ENCODE measurements at regions of chr4 and their contacts with region 1.

Region 1: DNA sequence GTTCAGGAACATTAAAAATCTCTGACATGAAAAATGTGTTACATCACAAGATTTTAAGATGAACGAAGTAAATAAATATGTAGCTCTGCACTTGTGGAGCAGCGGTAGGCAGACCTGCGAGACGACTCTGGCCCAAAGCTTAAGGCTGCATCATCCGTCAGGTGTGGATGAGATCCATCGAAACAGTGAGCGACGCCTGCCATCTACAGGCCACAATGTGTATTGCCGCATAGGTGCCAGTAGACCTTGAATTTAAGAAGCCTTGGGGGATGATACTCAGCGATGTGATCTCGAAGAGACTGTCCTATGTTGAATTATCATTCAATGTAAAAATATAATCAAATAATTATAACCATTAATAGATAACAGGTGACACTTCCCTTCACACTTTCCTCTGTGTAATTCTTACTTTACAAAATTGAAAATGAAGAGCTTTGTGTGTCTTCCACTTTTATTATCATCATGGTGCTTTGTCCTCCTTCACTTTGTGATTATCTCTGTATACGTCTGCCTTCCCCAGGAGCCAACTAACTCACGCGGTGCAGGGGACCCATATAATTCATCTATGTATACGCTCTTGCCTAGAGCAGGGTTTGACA is 851.0 kb downstream of the RAB28 start:
- DNase-seq: peak; percentile 62 to 75 (median 69)
- ATAC-seq: peak; percentile 79 to 91 (median 89)
- H3K4me3 ChIP-seq: no peak overlapping the region
- H3K27ac ChIP-seq: no peak overlapping the region
- H3K4me1 ChIP-seq: no peaks in the 10 kb centered on the region
- H3K27me3 ChIP-seq: no peaks in the 10 kb centered on the region
- CTCF ChIP-seq: peak; percentile 76 to 93 (median 85)
- POLR2A ChIP-seq: no peak

Region 2: GRCh38 chr4:11774346-11774745 is 858.8 kb before region 1 on chr4:
- intact Hi-C with region 1: loop called in 6 of 10 experiments (anchors 5 to 10 kb)
- DNase-seq: no peak
- ATAC-seq: peak in 2 of 4 donors; percentile 36 to 50
- H3K4me3 ChIP-seq: no peak overlapping the region
- H3K27ac ChIP-seq: peak overlapping the region in 1 of 12 donors; percentile 19
- H3K4me1 ChIP-seq: peaks cover 0 to 5% (median 0%) of the 10 kb centered on the region in 12 donors
- H3K27me3 ChIP-seq: no peaks in the 10 kb centered on the region
- CTCF ChIP-seq: no peak
- POLR2A ChIP-seq: no peak

Region 3: DNA sequence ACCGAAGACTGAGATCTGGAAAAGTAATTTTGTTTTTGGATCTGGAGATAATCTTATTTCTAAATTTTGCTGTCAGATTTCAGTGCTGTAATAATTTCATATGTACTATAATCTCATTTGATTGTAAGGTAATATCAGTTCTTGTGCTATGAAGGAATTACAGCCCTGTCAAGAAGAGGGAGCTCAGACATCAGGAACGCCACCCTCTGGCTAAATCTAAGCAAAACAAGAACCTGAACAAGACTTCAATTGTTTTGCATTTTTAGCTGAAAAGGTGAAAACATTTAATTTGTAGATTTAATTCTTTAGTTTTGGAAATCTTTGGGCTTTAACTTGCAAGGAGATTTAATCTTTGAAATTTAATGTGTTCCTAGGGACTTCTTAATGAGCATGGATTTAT is 679.1 kb before region 1 on chr4:
- intact Hi-C with region 1: loop called in 1 of 10 experiments (anchors 10 kb)
- DNase-seq: no peak
- ATAC-seq: no peak
- H3K4me3 ChIP-seq: no peak overlapping the region
- H3K27ac ChIP-seq: no peak overlapping the region
- H3K4me1 ChIP-seq: no peaks in the 10 kb centered on the region
- H3K27me3 ChIP-seq: no peaks in the 10 kb centered on the region
- CTCF ChIP-seq: peak in 10 of 12 donors; percentile 23 to 61 (median 46)
- POLR2A ChIP-seq: no peak

Region 4: DNA sequence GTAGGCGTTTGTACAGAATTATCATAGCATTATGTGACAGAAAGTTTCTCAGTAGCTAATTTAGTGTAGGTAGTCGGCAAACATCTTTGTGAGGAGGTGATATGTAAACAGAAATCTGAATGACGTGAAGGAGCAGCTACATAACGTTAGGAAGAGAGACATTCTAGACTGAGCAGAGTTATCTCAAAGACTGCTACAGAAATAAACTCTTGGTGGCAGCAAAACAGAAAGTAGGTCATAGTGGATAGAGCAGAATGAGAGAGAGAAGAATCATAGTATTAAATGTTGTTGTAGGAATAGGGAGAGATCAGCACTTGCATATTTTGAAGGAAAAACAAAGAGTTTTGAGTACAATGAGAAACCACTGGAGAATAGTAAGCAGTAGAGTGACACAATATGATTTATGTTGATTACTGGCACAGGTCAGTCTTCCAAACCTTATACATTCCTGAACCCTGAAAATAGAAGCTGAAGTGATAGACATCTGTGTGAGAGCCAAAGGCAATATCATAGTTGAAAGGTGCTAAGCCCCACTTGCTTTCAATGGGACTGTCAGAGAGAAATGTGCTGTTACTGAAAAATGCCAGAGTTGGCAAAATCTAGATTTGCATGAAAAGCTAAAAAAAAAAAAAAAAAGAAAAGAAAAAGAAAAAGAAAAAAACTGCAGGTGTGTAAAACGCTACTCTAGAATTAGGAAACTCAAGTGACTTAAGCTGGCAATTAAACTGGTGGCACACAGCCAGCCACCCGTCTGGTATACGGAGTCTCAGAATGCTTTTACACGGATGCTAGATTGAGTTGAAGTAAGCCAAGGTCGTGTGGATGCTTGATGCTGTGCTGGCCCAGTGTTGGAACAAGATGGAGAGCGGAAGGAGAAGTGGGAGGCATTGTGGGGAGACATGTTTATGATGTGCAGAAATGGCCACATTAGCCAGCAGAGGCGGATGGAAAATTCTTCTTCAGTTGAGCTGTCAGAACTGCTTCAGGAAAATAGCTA is 454.2 kb before region 1 on chr4:
- intact Hi-C with region 1: loop called in 2 of 10 experiments (anchors 10 kb)
- DNase-seq: peak in 3 of 5 donors; percentile 30 to 51 (median 35)
- ATAC-seq: peak in 3 of 4 donors; percentile 62 to 74 (median 65)
- H3K4me3 ChIP-seq: no peak overlapping the region
- H3K27ac ChIP-seq: peak overlapping the region in 2 of 12 donors; percentile 7 to 22
- H3K4me1 ChIP-seq: peaks cover 0 to 4% (median 0%) of the 10 kb centered on the region in 12 donors
- H3K27me3 ChIP-seq: no peaks in the 10 kb centered on the region
- CTCF ChIP-seq: peak in 1 of 12 donors; percentile 12
- POLR2A ChIP-seq: no peak

Region 5: DNA sequence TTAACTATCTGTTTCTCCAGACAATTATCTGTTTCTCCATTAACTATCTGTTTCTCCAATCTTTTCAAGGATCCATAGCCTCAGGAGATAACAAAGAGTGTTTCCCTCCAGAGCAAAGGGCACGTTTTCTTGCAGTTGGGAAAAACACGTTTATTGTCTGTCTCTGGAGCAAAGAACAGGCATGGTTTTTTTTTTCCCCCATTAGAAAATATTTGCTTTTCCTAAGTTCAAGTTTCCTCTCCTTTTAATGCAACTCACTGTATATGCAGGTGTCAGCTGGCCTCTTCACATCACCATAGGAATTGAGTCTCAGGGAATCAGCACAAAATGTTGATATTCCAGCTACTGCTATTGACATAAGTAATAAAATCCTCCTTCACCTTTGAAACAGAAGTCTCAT is 133.5 kb before region 1 on chr4:
- intact Hi-C with region 1: loop called in 1 of 10 experiments (anchors 10 kb)
- DNase-seq: no peak
- ATAC-seq: no peak
- H3K4me3 ChIP-seq: no peak overlapping the region
- H3K27ac ChIP-seq: peak overlapping the region in 1 of 12 donors; percentile 43
- H3K4me1 ChIP-seq: peaks cover 0 to 4% (median 0%) of the 10 kb centered on the region in 12 donors
- H3K27me3 ChIP-seq: no peaks in the 10 kb centered on the region
- CTCF ChIP-seq: no peak
- POLR2A ChIP-seq: no peak

Measured in heart left ventricle (tissue), 16 donors.